A673 (cell line): ENCODE measurements at regions of chr15 and their contacts with region 1.

Region 1: DNA sequence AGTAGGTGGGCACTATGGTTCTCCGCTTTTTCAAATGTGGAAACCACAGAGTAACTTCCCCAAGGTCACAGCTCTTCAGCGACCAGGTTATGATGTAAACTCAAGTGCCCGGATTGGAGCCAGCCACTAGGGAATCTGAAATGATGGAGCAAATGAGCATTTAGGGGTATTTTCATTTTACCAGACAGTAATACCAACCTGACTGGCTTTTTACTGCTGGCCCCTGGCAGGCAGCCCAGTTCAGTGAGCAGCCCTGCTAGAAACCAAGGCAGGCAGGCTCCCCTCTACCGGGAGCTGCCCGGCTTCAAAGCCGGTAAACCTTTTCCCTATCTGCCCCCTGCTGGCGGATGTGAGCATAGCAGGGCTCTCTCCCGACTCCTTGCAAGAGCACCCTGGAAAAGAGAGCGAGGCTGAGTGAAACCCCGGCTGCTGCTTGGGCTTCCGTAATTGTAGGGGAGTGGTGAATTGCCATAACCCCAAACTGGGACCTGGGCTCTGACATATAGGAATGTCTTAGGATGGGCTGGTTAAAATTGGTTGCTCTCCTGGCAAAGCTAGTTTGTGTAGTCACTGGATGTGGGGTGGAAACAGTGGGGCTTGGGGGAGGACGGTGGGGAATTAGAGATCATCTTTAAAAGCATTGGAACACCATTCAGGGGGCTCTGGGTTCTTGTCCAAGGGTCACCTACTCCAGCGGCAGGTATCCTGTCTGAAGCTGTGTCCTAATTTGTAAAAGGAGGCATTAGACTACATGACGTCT is 98.0 kb upstream of the TNFAIP8L3 start:
- DNase-seq: peak; percentile 88
- H3K4me3 ChIP-seq: no peak overlapping the region
- H3K27ac ChIP-seq: no peak overlapping the region
- H3K4me1 ChIP-seq: no peaks in the 10 kb centered on the region
- H3K27me3 ChIP-seq: peaks cover 30% of the 10 kb centered on the region
- CTCF ChIP-seq: peak; percentile 94

Region 2: GRCh38 chr15:51132384-51133139 is 60.1 kb before region 1 on chr15:
- CTCF ChIA-PET with region 1: interaction called, 16 read pairs
- POLR2A ChIA-PET with region 1: no interaction called
- intact Hi-C with region 1: no loop called
- DNase-seq: peak; percentile 51
- H3K4me3 ChIP-seq: no peak overlapping the region
- H3K27ac ChIP-seq: no peak overlapping the region
- H3K4me1 ChIP-seq: no peaks in the 10 kb centered on the region
- H3K27me3 ChIP-seq: no peaks in the 10 kb centered on the region
- CTCF ChIP-seq: peak; percentile 94